Heart right ventricle (tissue), 16 donors: ENCODE measurements at regions of chr5 and their contacts with region 1.

Region 1: DNA sequence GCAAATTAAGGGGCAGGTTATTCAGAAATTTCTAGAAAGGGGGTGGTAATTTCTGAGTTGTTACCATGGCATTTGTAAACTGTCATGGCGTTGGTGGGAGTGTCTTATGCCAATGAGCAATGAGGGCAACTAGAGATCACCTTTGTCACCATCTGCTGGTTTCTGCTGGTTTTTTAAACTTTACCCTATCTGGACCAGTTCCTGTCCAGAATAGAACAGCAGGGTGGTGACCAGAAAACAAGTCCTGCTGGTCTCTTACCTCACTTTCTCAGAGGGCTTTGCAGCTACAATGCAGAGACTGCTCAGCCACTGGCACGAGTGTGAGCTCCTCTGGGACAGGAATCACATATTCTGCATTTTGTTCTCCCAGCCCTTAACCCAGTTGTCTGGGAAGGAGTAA is 51.4 kb downstream of the FAM114A2 start:
- DNase-seq: no peak
- ATAC-seq: no peak
- H3K4me3 ChIP-seq: no peak overlapping the region
- H3K27ac ChIP-seq: no peak overlapping the region
- H3K4me1 ChIP-seq: peaks cover 0 to 4% (median 0%) of the 10 kb centered on the region in 9 donors
- H3K27me3 ChIP-seq: no peaks in the 10 kb centered on the region
- CTCF ChIP-seq: no peak

Region 2: DNA sequence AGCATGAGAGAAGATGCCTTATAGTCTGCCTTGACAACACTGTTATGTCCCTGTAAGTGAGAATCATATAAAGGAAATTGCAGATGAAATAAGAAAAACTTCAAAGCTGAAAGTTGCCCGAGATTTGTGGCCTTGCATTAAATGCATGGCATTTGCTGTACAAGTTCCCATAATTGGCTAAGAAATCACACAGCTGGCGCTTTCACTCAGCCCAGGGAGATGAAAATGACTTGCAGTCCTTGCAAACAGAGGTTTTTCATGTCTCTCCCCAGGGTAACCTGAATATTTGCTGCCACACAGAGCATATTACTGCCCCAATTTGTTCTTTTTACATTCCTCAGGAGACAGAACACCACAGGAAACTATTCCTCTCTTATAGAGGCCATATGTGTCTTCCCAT is 123.4 kb before region 1 on chr5:
- intact Hi-C with region 1: no loop called
- DNase-seq: no peak
- ATAC-seq: no peak
- H3K4me3 ChIP-seq: no peak overlapping the region
- H3K27ac ChIP-seq: no peak overlapping the region
- H3K4me1 ChIP-seq: no peaks in the 10 kb centered on the region
- H3K27me3 ChIP-seq: no peaks in the 10 kb centered on the region
- CTCF ChIP-seq: no peak

Region 3: GRCh38 chr5:154038707-154039457 is 51.6 kb after region 1 on chr5 and contains the starts of genes FAM114A2 and MFAP3:
- intact Hi-C with region 1: no loop called
- DNase-seq: peak; percentile 88 to 91
- ATAC-seq: peak; percentile 97 to 100 (median 99)
- H3K4me3 ChIP-seq: peak within 1 kb of the TSS; percentile 63 to 92 (median 76)
- H3K27ac ChIP-seq: peak within 1 kb of the TSS; percentile 59 to 96 (median 88)
- H3K4me1 ChIP-seq: peaks cover 0 to 66% (median 57%) of the 10 kb centered on the region in 9 donors
- H3K27me3 ChIP-seq: no peaks in the 10 kb centered on the region
- CTCF ChIP-seq: peak in 1 of 9 donors; percentile 9
- total RNA-seq, gene FAM114A2: 25.5 to 47.5 (median 36.5) TPM
- total RNA-seq, gene MFAP3: 23.2 to 44.3 (median 34.1) TPM

Region 4: GRCh38 chr5:154065971-154066370 is 78.7 kb after region 1 on chr5:
- intact Hi-C with region 1: loop called in 1 of 10 experiments (anchors 5 kb)
- DNase-seq: no peak
- ATAC-seq: no peak
- H3K4me3 ChIP-seq: no peak overlapping the region
- H3K27ac ChIP-seq: no peak overlapping the region
- H3K4me1 ChIP-seq: no peaks in the 10 kb centered on the region
- H3K27me3 ChIP-seq: no peaks in the 10 kb centered on the region
- CTCF ChIP-seq: no peak